Tibial artery (tissue), 4 donors: ENCODE measurements at regions of chr1 and their contacts with region 1.

Region 1: DNA sequence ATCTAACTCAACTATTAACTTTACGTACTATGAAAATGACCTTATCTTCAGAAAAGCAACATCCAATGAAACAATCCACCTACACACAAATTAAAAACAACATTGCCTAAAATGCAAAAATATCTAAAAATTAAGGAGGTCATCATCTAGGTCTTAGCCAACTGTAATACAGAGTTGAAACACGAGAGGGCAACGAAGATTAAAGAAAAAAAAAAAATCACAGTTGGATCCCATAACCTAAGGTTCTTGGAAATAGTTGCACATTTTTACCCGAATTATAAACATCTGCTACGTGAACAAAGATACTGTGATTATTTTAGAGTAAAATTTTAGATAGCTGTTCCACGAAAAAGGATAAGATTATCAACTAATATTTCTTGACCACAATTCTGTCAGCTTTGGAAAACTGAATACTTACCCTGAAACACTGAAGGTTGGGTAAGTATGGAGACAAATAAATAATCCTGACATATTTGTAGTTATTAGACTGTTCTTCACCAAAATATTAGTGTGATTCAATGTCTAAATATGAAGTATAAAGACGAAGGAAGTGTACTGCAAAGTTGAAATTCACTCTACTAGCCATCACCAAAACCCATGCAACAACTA is 88.0 kb upstream of the AK4 start:
- DNase-seq: no peak
- H3K4me3 ChIP-seq: no peak overlapping the region
- H3K27ac ChIP-seq: peak overlapping the region; percentile 1 to 31
- H3K4me1 ChIP-seq: peaks cover 0 to 91% (median 45%) of the 10 kb centered on the region in 4 donors
- H3K27me3 ChIP-seq: no peaks in the 10 kb centered on the region
- CTCF ChIP-seq: peak; percentile 70 to 73

Region 2: DNA sequence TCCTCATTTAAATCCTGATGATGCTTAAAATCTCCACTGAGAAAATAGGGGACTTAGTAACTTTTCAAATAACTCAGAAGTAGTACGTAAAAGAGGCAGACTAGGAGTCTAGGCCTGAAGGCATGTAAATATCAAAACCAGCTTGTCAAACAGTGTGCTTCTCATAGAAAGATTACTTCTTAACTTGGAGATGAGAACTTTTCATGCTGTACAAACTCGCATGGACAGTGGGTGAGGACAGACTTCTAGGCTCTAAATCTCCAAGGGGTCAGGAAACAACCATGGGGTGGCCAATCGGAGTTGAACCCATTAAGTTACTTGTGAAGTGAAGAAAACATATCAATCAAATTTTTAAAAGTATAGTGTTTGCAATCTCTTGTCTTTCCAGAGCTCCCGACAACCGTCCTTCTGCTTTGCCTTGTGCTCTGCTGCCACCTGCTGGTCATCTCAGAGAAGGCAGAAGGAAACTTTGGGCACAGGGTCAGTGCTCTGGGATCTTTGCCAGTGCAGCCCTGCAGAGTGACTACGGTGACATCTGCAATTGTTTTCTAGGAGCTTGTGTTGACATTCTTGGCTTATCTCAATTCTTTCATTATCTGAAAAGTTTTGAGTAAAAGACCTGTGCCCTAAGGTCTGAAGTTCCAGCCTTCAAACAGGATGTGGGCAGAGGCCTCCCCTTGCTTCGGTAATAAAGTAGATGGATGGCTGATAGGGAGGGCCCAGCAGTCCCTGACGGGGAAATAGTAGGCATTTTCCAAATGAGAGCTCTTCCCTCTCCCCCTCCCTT is 627.6 kb after region 1 on chr1:
- intact Hi-C with region 1: loop called (anchors 10 kb)
- DNase-seq: peak; percentile 87 to 91
- H3K4me3 ChIP-seq: no peak overlapping the region
- H3K27ac ChIP-seq: no peak overlapping the region
- H3K4me1 ChIP-seq: peaks cover 0 to 23% (median 11%) of the 10 kb centered on the region in 4 donors
- H3K27me3 ChIP-seq: peaks cover 0 to 4% of the 10 kb centered on the region in 2 donors
- CTCF ChIP-seq: peak; percentile 93